Activated T-helper 2 cell treated with anti-CD3 and anti-CD28 coated beads, Interferon-gamma antibody, Interleukin-2, Interleukin-4, amounts not matched to agents 10 μg/mL and 5 μg/mL and 100 μg/mL, durations not matched to agents 14 hours and 24 hours and 36 hours (primary cell): ENCODE measurements at regions of chr1 and their contacts with region 1.

Region 1: GRCh38 chr1:20361806-20362640 is 71.3 kb downstream of the VWA5B1 start:
- DNase-seq: no peak
- H3K4me3 Mint-ChIP-seq: no peak overlapping the region
- H3K27ac Mint-ChIP-seq: no peak overlapping the region
- H3K4me1 Mint-ChIP-seq: peaks cover 8% of the 10 kb centered on the region
- H3K27me3 Mint-ChIP-seq: peaks cover 59% of the 10 kb centered on the region

Region 2: DNA sequence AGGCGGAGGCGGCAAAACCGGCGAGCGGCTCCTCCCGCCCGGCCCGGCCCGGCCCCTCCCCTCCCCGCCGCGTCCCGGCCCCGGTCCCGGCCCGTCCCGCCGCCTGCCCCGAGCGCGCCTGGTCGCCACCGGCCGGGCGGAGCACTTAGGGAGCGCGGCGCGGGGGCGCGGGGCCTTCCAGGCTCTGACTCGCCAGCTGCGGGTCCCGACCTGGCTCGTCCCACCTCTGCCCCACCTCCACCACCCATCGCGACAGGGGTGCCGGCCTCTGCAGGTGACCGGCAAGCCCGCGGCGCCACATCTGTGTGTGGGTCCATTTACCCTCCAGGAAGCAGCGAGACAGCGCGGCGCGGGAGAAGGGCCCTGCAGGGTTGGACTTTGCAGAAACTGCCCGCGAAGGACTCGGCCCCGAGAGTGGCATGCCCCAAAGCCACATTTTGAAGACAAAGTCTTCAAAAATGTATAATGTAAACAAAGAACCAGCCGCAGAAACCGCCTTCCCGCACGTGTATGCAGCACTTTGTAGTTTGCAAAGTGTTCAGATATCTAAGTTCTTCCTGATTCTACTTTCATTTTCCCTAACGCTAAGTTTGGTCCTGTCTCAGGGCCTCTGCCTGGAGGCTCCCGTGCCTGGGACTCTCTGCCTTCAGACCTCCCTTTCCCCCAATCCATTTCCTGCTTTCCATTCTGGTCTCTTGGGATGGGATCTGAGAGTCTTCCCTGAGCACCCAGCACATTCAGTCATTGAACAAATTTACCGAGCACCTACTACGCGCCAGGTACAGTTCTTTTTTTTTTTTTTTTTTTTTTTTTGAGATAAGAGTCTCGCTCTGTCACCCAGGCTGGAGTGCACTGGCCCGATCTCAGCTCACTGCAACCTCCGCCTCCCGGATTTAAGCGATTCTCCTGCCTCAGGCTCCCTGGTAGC is 561.9 kb before region 1 on chr1 and contains the start of gene TMCO4:
- intact Hi-C with region 1: no loop called
- DNase-seq: peak; percentile 49
- H3K4me3 Mint-ChIP-seq: peak within 1 kb of the TSS; percentile 87
- H3K27ac Mint-ChIP-seq: peak within 1 kb of the TSS; percentile 93
- H3K4me1 Mint-ChIP-seq: peaks cover 17% of the 10 kb centered on the region
- H3K27me3 Mint-ChIP-seq: peaks cover 12% of the 10 kb centered on the region
- total RNA-seq, gene TMCO4: 12.9 and 16.1 TPM in 2 replicates

Region 3: GRCh38 chr1:20322081-20322824 is 39.8 kb before region 1 on chr1:
- intact Hi-C with region 1: loop called (anchors 1 kb)
- DNase-seq: peak; percentile 15
- H3K4me3 Mint-ChIP-seq: peak overlapping the region; percentile 13
- H3K27ac Mint-ChIP-seq: peak overlapping the region; percentile 26
- H3K4me1 Mint-ChIP-seq: peaks cover 27% of the 10 kb centered on the region
- H3K27me3 Mint-ChIP-seq: peaks cover 41% of the 10 kb centered on the region

Region 4: GRCh38 chr1:20339811-20340457 is 22.1 kb before region 1 on chr1:
- intact Hi-C with region 1: no loop called
- DNase-seq: no peak
- H3K4me3 Mint-ChIP-seq: no peak overlapping the region
- H3K27ac Mint-ChIP-seq: no peak overlapping the region
- H3K4me1 Mint-ChIP-seq: no peaks in the 10 kb centered on the region
- H3K27me3 Mint-ChIP-seq: peaks cover 39% of the 10 kb centered on the region

Region 5: GRCh38 chr1:20485527-20486456 is 123.8 kb after region 1 on chr1 and contains the start of gene CAMK2N1:
- intact Hi-C with region 1: loop called (anchors 5 kb)
- DNase-seq: peak; percentile 26
- H3K4me3 Mint-ChIP-seq: peak within 1 kb of the TSS; percentile 85
- H3K27ac Mint-ChIP-seq: peak within 1 kb of the TSS; percentile 52
- H3K4me1 Mint-ChIP-seq: peaks cover 4% of the 10 kb centered on the region
- H3K27me3 Mint-ChIP-seq: peaks cover 69% of the 10 kb centered on the region
- total RNA-seq, gene CAMK2N1: 2.2 TPM in 2 replicates